Heart right ventricle (tissue), 16 donors: ENCODE measurements at regions of chr10 and their contacts with region 1.

Region 1: GRCh38 chr10:18140149-18140956 is at the start of gene CACNB2:
- DNase-seq: peak; percentile 68 to 74
- ATAC-seq: peak; percentile 70 to 87 (median 78)
- H3K4me3 ChIP-seq: peak within 1 kb of the TSS; percentile 22 to 76 (median 61)
- H3K27ac ChIP-seq: peak within 1 kb of the TSS; percentile 51 to 86 (median 82)
- H3K4me1 ChIP-seq: peaks cover 0 to 27% (median 11%) of the 10 kb centered on the region in 9 donors
- H3K27me3 ChIP-seq: peaks cover 0 to 44% (median 20%) of the 10 kb centered on the region in 7 donors
- CTCF ChIP-seq: peak in 4 of 9 donors; percentile 6 to 27 (median 16)
- total RNA-seq, gene CACNB2: 22.3 to 71.1 (median 38.8) TPM

Region 2: GRCh38 chr10:18179891-18180290 is 39.5 kb after region 1 on chr10:
- intact Hi-C with region 1: loop called in 1 of 10 experiments (anchors 5 kb)
- DNase-seq: peak in 1 of 2 donors; percentile 50
- ATAC-seq: peak; percentile 90 to 98 (median 94)
- H3K4me3 ChIP-seq: peak overlapping the region in 6 of 10 donors; percentile 19 to 39 (median 32)
- H3K27ac ChIP-seq: peak overlapping the region; percentile 60 to 87 (median 78)
- H3K4me1 ChIP-seq: peaks cover 0 to 33% (median 21%) of the 10 kb centered on the region in 9 donors
- H3K27me3 ChIP-seq: no peaks in the 10 kb centered on the region
- CTCF ChIP-seq: no peak

Region 3: GRCh38 chr10:18214691-18215563 is 74.6 kb after region 1 on chr10:
- intact Hi-C with region 1: loop called in 6 of 10 experiments (anchors 5 to 10 kb)
- DNase-seq: peak in 1 of 2 donors; percentile 38
- ATAC-seq: peak; percentile 63 to 77 (median 70)
- H3K4me3 ChIP-seq: no peak overlapping the region
- H3K27ac ChIP-seq: no peak overlapping the region
- H3K4me1 ChIP-seq: peaks cover 0 to 35% (median 13%) of the 10 kb centered on the region in 9 donors
- H3K27me3 ChIP-seq: no peaks in the 10 kb centered on the region
- CTCF ChIP-seq: peak; percentile 56 to 91 (median 76)

Region 4: DNA sequence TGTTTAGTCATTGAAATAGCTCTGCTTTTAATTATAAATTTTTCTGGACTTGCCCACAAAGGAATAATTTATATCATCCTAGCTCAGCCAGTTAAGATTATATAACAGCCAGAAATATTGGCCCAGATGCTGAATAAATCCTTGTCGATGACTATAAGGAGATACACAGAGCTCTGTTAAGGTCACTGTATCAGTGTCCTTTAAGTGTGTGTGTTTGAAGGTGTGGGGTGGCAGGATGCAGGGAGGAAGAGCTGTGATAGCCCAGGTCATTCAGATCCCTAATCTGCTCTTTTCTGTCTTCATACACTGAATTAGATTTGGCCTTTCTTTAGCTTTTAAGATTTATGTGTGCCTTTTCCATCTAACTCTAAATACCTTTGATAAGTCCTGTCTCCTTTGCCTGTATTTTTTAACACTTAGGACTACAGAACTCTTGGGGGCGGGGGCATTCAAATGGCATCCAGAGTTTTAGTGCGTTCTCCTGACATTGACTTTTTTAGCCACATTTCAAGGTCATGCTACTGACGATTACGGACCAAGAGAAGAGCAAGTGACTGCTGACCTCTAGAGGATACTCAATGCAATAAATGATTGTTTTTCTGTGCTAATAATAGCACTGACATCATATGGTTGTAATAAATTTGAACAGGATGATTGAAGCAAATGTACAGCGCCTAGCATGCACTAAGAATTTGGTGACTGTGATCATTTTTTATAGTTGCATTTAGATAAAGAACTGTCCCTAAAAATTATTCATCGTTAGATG is 172.2 kb after region 1 on chr10:
- intact Hi-C with region 1: loop called in 1 of 10 experiments (anchors 10 kb)
- DNase-seq: peak in 1 of 2 donors; percentile 29
- ATAC-seq: peak; percentile 68 to 84 (median 80)
- H3K4me3 ChIP-seq: peak overlapping the region in 1 of 10 donors; percentile 6
- H3K27ac ChIP-seq: peak overlapping the region; percentile 6 to 88 (median 84)
- H3K4me1 ChIP-seq: peaks cover 0 to 38% (median 8%) of the 10 kb centered on the region in 9 donors
- H3K27me3 ChIP-seq: no peaks in the 10 kb centered on the region
- CTCF ChIP-seq: peak in 7 of 9 donors; percentile 40 to 65 (median 53)

Region 5: DNA sequence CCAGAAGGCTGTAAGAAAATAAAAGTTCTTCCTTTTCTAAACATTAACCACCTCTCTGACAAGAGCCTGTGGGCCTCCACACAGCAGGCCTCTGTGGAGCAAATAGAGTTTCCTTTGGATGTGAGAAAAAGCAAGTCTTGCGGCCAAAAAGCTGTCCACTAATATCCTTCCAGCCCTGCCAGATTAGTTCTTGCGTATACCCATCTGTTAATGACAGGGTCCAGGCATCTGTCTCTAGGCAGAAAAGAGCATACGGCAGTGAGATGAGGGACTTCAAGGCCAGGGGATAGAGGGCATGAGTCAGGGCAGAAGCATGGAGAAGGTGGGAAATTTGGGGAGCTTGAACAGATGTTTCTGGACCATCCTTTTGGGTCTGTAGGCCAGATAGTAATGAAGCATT is 346.1 kb after region 1 on chr10:
- intact Hi-C with region 1: no loop called
- DNase-seq: peak in 1 of 2 donors; percentile 13
- ATAC-seq: peak in 7 of 8 donors; percentile 35 to 91 (median 79)
- H3K4me3 ChIP-seq: no peak overlapping the region
- H3K27ac ChIP-seq: peak overlapping the region in 6 of 10 donors; percentile 7 to 54 (median 24)
- H3K4me1 ChIP-seq: peaks cover 0 to 28% (median 3%) of the 10 kb centered on the region in 9 donors
- H3K27me3 ChIP-seq: no peaks in the 10 kb centered on the region
- CTCF ChIP-seq: no peak